Activated naive CD4-positive, alpha-beta T cell treated with anti-CD3 and anti-CD28 coated beads for 36 hours (primary cell): ENCODE measurements at regions of chr1 and their contacts with region 1.

Region 1: GRCh38 chr1:225999227-225999911 is at the start of gene SDE2:
- DNase-seq: peak; percentile 100
- H3K4me3 Mint-ChIP-seq: peak within 1 kb of the TSS; percentile 100
- H3K27ac Mint-ChIP-seq: peak within 1 kb of the TSS; percentile 100
- H3K4me1 Mint-ChIP-seq: peaks cover 68% of the 10 kb centered on the region
- H3K27me3 Mint-ChIP-seq: no peaks in the 10 kb centered on the region
- total RNA-seq, gene SDE2: 15.3 to 16.5 TPM

Region 2: DNA sequence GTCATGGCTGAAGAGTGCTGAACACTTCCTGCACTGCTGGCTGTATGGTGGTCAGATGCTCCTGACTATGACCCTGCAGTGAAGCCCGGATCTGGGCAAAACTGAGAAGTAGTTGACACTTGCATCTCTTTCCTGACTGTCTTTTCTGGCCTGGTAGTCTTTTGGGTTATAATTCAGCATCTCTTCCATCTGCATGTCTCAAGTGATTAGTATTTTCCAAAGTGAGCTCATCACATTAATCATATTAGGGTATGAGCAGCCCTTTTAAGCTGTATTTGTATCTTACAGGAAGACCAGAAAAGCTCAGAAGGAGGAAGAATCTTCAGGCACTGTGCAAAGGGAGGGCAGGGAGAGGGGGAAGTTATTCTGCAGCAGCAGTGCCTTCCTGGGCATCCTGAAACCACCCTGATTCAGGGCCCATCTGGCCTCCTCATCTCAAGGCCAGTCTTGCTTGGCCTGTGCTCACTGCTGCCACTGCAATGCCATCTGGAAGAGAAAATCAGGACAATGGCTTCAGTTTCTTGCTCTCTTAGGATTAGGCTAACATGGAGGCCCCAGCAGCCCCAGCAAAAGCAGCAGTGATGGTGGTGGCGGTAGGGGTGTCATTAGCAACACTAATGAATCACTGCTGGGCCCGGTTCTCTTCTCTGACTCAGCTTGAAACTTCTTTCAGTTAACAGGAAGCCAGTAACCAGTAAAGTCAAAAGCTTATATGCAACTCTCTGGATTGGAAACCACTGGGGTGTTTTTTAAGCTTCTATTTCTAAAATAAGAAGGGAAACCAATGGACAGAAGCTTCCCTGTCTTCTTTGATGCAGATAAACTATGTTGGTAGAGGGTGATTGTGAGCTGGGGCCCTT is 1501.4 kb before region 1 on chr1:
- CTCF ChIA-PET with region 1: no interaction called
- intact Hi-C with region 1: loop called (anchors 10 kb)
- DNase-seq: peak; percentile 91
- H3K4me3 Mint-ChIP-seq: peak overlapping the region; percentile 54
- H3K27ac Mint-ChIP-seq: peak overlapping the region; percentile 92
- H3K4me1 Mint-ChIP-seq: peaks cover 40% of the 10 kb centered on the region
- H3K27me3 Mint-ChIP-seq: peaks cover 7% of the 10 kb centered on the region

Region 3: GRCh38 chr1:225467193-225468020 is 532.0 kb before region 1 on chr1:
- CTCF ChIA-PET with region 1: no interaction called
- intact Hi-C with region 1: loop called (anchors 1 kb)
- DNase-seq: peak; percentile 91
- H3K4me3 Mint-ChIP-seq: peak overlapping the region; percentile 90
- H3K27ac Mint-ChIP-seq: peak overlapping the region; percentile 99
- H3K4me1 Mint-ChIP-seq: peaks cover 17% of the 10 kb centered on the region
- H3K27me3 Mint-ChIP-seq: no peaks in the 10 kb centered on the region

Region 4: DNA sequence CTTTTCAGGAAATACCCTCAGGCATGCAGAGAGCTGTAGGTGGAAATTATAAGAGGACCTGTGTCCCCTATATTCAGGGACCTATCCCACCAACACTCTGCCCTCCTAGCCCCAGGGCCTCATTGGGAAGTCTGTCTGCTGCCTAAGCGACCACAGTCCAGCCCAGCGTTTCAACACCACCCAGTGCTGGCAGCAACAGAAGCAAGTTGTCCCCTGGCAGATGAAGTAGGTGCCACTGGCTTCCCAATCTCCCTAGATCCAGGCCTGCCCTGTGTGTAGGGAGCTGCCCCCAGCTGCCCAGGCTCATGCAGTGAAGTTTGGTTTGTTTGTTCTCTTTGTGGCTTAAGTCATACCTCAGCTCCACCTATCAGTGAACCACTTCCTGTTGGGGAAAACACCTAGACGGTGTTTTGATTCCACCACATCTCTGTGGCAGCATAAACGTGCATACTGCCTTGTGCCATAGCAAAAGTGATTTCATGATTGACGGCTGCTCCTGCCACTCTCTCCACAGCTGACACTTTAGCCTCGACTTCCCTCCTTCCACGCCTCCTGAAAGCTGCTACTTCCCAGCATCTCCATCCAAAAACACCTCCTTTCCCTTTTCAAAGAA is 102.3 kb before region 1 on chr1:
- CTCF ChIA-PET with region 1: no interaction called
- intact Hi-C with region 1: loop called (anchors 1 kb)
- DNase-seq: peak; percentile 87
- H3K4me3 Mint-ChIP-seq: peak overlapping the region; percentile 54
- H3K27ac Mint-ChIP-seq: peak overlapping the region; percentile 92
- H3K4me1 Mint-ChIP-seq: peaks cover 41% of the 10 kb centered on the region
- H3K27me3 Mint-ChIP-seq: no peaks in the 10 kb centered on the region

Region 5: GRCh38 chr1:226017070-226017469 is 17.7 kb after region 1 on chr1:
- CTCF ChIA-PET with region 1: no interaction called
- intact Hi-C with region 1: no loop called
- DNase-seq: no peak
- H3K4me3 Mint-ChIP-seq: no peak overlapping the region
- H3K27ac Mint-ChIP-seq: no peak overlapping the region
- H3K4me1 Mint-ChIP-seq: no peaks in the 10 kb centered on the region
- H3K27me3 Mint-ChIP-seq: no peaks in the 10 kb centered on the region

Region 6: GRCh38 chr1:226121587-226122400 is 122.4 kb after region 1 on chr1:
- CTCF ChIA-PET with region 1: interaction called, 3 read pairs
- intact Hi-C with region 1: loop called (anchors 1 kb)
- DNase-seq: peak; percentile 68
- H3K4me3 Mint-ChIP-seq: peak overlapping the region; percentile 76
- H3K27ac Mint-ChIP-seq: peak overlapping the region; percentile 50
- H3K4me1 Mint-ChIP-seq: peaks cover 22% of the 10 kb centered on the region
- H3K27me3 Mint-ChIP-seq: no peaks in the 10 kb centered on the region

Region 7: GRCh38 chr1:226308723-226309315 is 309.4 kb after region 1 on chr1 and contains the start of gene LIN9:
- CTCF ChIA-PET with region 1: no interaction called
- intact Hi-C with region 1: loop called (anchors 1 kb)
- DNase-seq: peak; percentile 96
- H3K4me3 Mint-ChIP-seq: peak within 1 kb of the TSS; percentile 91
- H3K27ac Mint-ChIP-seq: peak within 1 kb of the TSS; percentile 82
- H3K4me1 Mint-ChIP-seq: peaks cover 16% of the 10 kb centered on the region
- H3K27me3 Mint-ChIP-seq: peaks cover 16% of the 10 kb centered on the region
- total RNA-seq, gene LIN9: 7.7 to 9.5 TPM